PC-9 (cell line): ENCODE measurements at regions of chr5 and their contacts with region 1.

Region 1: GRCh38 chr5:91257301-91257700 is 125.8 kb downstream of the ARRDC3 start:
- DNase-seq: no peak
- H3K4me3 ChIP-seq: no peak overlapping the region
- H3K27ac ChIP-seq: no peak overlapping the region
- H3K4me1 ChIP-seq: no peaks in the 10 kb centered on the region
- H3K27me3 ChIP-seq: no peaks in the 10 kb centered on the region
- CTCF ChIP-seq: no peak

Region 2: DNA sequence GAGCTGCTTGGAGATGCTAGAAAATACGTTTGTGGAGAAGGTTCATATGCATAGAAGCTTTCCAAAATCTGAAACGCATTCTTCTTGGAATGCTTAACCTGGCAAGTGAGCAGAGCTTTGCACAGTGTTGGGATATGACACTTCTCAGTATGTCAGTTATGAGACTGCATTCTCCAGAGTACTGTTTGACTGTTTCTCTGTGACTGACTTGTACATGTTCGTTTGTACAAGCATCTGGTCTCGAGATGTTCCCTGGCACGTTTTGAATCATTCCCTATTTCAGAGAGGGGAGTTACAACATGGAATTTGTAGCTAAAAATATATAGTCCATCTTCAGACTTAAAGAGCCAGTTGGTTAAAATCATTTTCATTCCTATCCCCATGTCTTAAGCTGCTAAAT is 146.6 kb before region 1 on chr5:
- CTCF ChIA-PET with region 1: no interaction called
- POLR2A ChIA-PET with region 1: no interaction called
- intact Hi-C with region 1: no loop called
- DNase-seq: no peak
- H3K4me3 ChIP-seq: no peak overlapping the region
- H3K27ac ChIP-seq: no peak overlapping the region
- H3K4me1 ChIP-seq: 0 out of 2 replicates have a peak, but pooled peaks cover 8% of the 10 kb centered on the region
- H3K27me3 ChIP-seq: no peaks in the 10 kb centered on the region
- CTCF ChIP-seq: no peak

Region 3: DNA sequence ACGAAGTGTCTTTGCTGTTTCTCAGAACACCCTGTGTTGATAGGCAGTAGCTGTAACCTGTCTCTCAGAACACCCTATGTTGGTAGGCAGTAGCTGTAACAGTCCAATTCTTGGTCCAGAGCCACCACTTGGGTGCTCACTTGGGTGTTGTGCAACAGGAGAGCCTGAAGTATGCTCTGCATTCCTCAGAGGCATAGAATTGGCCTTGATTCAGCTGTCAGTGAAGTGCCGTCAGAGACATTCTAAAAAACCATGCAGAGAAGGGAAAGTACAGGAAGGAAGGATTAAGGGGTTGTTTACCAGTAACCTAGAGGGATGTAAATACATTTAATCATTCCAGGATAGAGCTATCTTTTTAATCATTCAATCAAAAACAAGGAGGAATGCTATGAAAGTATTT is 105.4 kb before region 1 on chr5:
- CTCF ChIA-PET with region 1: no interaction called
- POLR2A ChIA-PET with region 1: interaction called, 14 read pairs
- intact Hi-C with region 1: no loop called
- DNase-seq: peak; percentile 62 to 84
- H3K4me3 ChIP-seq: no peak overlapping the region
- H3K27ac ChIP-seq: no peak overlapping the region
- H3K4me1 ChIP-seq: peaks cover 25% of the 10 kb centered on the region
- H3K27me3 ChIP-seq: no peaks in the 10 kb centered on the region
- CTCF ChIP-seq: no peak

Region 4: GRCh38 chr5:91499943-91500531 is 242.7 kb after region 1 on chr5:
- CTCF ChIA-PET with region 1: no interaction called
- POLR2A ChIA-PET with region 1: no interaction called
- intact Hi-C with region 1: no loop called
- DNase-seq: peak in 1 of 2 experiments; percentile 41
- H3K4me3 ChIP-seq: no peak overlapping the region
- H3K27ac ChIP-seq: no peak overlapping the region
- H3K4me1 ChIP-seq: no peaks in the 10 kb centered on the region
- H3K27me3 ChIP-seq: no peaks in the 10 kb centered on the region
- CTCF ChIP-seq: peak; percentile 79